Posterior cingulate gyrus (tissue), 11 donors: ENCODE measurements at regions of chr9 and their contacts with region 1.

Region 1: DNA sequence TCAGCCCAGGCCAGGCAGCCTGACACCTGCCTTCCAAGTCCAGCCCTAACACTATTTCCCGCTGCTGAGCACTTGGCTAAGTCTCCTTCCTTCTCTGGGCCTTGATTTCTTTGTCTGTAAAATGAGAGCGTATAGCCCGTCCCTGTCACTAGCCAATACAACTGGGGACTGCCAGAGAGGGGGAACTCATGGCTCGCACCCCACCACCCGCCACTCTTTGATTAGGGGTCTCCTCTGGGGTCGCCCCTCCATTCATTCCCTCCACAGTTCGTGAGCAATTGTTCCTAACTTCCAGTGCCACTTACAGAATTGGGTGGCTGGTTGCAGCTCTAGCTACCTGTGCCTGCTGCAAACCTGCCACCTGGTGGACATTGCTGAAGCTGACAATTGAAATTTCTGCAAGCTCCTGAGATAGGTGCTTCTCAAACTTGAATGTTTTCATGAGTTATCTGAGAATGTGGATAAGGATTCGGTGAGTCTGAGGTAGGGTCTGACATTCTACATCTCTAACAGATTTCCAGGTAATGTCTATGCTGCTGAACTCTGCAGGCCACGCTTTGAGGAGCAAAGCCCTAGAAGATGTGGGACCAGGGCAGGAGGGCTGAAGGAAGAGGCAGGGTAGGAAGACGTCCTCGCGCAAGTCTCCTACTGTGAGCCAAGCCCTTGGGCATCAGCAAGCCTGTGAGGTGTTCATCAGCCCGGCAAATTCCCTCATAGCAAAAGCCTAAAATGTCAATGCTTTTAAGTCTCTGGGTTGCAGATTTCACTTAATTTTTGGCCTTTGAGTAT is 13.3 kb upstream of the RECK start:
- DNase-seq: peak; percentile 37 to 92 (median 70)

Region 2: DNA sequence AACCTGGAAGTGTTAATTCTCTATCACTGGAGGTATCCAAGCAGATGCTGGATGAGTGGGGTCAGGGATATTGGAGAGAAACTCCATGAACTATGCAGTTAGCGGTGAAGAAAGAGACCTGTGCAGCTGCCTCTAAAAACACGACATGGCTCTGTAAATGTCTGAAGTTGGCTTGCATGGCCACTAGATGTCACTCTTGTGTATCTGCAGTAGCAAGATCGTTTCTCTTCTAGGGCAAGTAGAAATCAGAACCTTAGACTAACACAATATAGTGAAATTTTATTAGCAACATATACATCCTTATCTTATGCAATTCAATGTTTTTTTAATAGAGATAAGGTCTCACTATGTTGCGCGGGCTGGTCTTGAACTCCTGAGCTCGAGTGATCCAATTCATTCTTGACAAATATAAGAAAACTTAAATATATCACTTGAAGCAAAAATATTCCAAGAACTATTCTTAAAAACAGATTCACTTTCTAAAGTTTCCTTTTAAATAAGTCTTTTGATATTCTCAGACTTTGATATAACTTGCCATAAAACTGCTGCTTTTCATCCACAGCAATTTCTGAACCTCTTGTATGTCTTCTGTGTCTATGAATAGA is 68.4 kb before region 1 on chr9:
- intact Hi-C with region 1: loop called (anchors 2 kb)
- DNase-seq: peak in 4 of 10 donors; percentile 26 to 55 (median 47)